Heart left ventricle (tissue), 16 donors: ENCODE measurements at regions of chr15 and their contacts with region 1.

Region 1: DNA sequence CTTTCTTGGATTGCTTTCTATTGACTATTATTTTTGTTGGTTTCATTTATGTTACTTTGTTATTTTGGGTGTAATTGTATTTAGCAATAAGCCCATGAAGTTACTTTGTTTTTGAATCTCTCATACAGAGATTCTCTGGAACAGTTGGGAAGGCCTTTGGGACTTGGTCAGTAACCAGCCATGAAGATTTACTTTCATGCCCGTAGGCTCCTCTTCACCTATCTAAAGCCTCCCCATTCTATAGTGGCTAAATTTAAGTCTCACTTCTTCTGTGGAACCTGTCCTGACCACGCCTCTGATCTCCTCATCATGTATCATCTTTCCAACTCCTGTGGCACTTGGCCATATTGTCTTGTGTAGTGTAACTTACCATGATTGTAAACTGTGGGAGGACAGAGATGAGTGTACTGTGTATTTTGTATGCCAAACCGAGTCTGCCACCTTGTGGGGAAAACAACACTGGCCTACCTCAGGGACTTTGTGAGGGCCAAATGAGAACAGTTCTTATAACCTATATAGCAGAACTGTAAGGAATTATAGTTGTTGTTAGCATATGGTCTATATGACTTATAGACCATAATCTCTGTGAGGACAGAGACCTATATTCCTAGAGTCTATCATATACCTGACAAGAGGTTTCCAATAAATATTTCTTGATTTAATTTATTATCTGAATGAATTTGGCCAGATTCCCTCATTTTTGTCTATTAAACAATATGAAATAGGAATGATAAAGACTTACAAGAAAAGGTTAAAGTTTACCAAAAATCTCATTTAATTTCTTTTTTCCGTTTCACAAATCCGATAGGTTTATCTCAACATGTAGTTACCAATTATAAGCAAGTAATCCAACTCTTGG is 75.0 kb downstream of the STARD9 start:
- DNase-seq: peak in 4 of 5 donors; percentile 47 to 58 (median 55)
- ATAC-seq: peak; percentile 87 to 98 (median 95)
- H3K4me3 ChIP-seq: no peak overlapping the region
- H3K27ac ChIP-seq: no peak overlapping the region
- H3K4me1 ChIP-seq: peaks cover 0 to 16% (median 2%) of the 10 kb centered on the region in 12 donors
- H3K27me3 ChIP-seq: no peaks in the 10 kb centered on the region
- CTCF ChIP-seq: peak; percentile 66 to 92 (median 82)
- POLR2A ChIP-seq: no peak

Region 2: DNA sequence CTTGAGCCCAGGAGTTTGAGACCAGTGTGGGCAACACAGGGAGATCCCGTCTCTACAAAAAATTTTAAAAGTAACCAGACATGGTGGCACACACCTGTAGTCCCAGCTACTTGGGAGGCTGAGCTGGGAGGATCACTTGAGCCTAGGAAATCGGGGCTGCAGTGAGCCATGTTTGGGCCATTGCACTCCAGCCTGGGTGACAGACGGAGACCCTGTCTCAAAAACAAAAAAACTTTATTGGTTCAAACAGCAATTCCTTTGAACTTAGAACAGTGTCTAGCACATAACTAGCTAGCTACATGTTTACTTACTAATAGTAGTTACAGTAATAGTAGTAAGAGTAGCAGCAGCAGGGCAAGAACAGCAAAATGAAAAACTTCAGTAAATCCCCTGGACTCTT is 91.7 kb before region 1 on chr15:
- intact Hi-C with region 1: loop called in 2 of 10 experiments (anchors 10 kb)
- DNase-seq: no peak
- ATAC-seq: no peak
- H3K4me3 ChIP-seq: no peak overlapping the region
- H3K27ac ChIP-seq: no peak overlapping the region
- H3K4me1 ChIP-seq: peaks cover 0 to 2% (median 0%) of the 10 kb centered on the region in 12 donors
- H3K27me3 ChIP-seq: no peaks in the 10 kb centered on the region
- CTCF ChIP-seq: no peak
- POLR2A ChIP-seq: no peak

Region 3: DNA sequence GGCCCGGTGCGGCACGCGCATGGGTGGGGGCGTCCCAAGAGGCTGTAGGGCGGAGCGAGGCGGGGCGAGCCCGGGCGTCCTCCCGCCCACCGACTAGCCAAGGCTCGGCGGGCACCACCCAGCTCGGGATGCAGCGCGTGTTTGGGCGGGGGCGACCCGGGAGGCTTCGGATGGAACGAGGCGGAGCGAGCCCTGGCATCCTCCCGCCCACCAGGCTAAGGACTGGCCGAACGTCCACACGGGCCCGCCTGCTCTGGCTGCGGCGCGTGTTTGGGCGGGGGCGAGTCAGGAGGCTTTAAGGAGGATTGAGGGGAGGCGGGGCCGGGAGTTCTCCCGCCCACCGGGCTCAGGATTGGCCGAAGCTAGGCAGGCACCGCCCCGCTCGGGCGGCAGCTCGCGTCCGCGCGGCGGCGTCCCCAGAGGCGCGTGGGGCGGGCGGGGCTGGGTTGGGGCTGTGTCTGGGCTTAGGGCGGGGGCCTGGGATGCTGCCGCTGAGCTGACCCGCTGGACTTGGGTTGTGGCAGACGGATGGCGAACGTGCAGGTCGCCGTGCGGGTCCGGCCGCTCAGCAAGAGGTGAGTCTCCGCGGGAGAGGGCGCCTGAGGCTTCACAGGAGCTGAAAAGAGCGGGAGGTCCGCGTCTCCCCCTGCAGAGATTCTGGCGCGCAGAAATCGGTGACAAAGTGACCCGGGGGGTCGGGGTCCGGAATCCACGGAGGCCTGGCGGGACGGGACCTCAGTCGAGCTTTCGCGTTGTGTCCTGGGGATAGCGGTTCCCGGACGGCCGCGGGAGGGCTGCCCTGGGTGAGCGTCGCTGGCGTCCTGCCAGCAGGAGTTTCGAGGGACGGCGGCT is 75.0 kb before region 1 on chr15 and contains the start of gene STARD9:
- intact Hi-C with region 1: loop called in 6 of 10 experiments (anchors 5 to 10 kb)
- DNase-seq: peak; percentile 98 to 99 (median 99)
- ATAC-seq: peak; percentile 96 to 98 (median 97)
- H3K4me3 ChIP-seq: peak within 1 kb of the TSS; percentile 63 to 98 (median 86)
- H3K27ac ChIP-seq: peak within 1 kb of the TSS; percentile 83 to 96 (median 90)
- H3K4me1 ChIP-seq: peaks cover 0 to 50% (median 26%) of the 10 kb centered on the region in 12 donors
- H3K27me3 ChIP-seq: no peaks in the 10 kb centered on the region
- CTCF ChIP-seq: peak in 2 of 12 donors; percentile 5 to 37
- POLR2A ChIP-seq: peak in 1 of 2 donors; percentile 80
- total RNA-seq, gene STARD9: 4.3 to 10.3 (median 8.0) TPM

Region 4: DNA sequence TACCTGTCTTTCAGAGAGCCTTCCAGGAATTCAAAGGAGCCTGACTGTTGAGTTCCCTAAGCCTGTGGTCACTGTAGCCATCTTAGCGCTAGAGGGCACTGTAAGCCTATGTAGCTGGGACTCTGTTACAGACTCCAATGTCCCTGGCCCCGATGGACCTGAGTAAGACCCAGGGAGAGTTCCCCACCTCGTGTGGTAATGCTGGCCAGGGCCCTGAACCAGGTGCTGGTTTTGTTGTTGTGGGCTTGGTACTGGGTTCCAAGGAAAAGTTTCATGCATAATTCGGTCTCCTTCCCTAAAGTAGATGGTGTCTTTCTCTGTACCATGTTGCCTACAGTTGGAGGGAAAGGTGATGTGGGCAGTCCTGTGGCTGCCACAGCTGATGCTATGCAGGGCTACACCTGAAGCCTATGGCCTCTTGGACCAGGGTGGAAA is 54.1 kb after region 1 on chr15:
- intact Hi-C with region 1: no loop called
- DNase-seq: peak in 3 of 5 donors; percentile 41 to 52 (median 51)
- ATAC-seq: peak; percentile 88 to 96 (median 94)
- H3K4me3 ChIP-seq: no peak overlapping the region
- H3K27ac ChIP-seq: no peak overlapping the region
- H3K4me1 ChIP-seq: peaks cover 0 to 7% (median 0%) of the 10 kb centered on the region in 12 donors
- H3K27me3 ChIP-seq: no peaks in the 10 kb centered on the region
- CTCF ChIP-seq: peak; percentile 67 to 85 (median 74)
- POLR2A ChIP-seq: no peak